ENCODE measurements at regions of chr2 and their contacts with region 1.

Region 1: DNA sequence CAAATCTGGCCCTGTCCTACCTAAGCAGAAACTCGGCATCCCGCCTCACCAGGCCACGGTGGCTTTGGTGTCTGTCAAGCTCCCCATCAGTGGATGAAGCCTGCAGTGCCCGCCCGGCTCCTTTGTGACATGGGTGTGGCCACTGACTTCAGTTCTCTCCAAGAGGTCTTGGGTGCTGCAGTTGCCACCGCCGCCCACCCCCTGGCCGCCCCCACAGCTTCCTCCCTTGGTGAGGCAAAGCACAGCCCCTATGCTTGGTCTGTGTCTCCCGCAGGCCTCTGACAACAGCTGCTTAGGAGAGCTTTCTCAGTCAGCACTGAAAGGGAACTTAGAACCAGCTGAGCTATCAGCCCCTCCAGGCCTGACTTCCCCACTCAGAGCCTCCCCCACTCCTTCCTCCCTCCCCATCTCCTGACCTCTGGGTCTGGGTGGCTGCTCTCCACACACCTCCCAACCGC is 22.9 kb upstream of the GPR55 start:
- DNase-seq: no peak
- ATAC-seq: no peak
- H3K4me3 ChIP-seq: no peak overlapping the region
- H3K4me3 Mint-ChIP-seq: no peak overlapping the region
- H3K27ac ChIP-seq: no peak overlapping the region
- H3K27ac Mint-ChIP-seq: no peak overlapping the region
- H3K4me1 ChIP-seq: peaks cover 11% of the 10 kb centered on the region
- H3K4me1 Mint-ChIP-seq: peaks cover 25% of the 10 kb centered on the region
- H3K27me3 ChIP-seq: no peaks in the 10 kb centered on the region
- H3K27me3 Mint-ChIP-seq: no peaks in the 10 kb centered on the region
- CTCF ChIP-seq: no peak

Region 2: DNA sequence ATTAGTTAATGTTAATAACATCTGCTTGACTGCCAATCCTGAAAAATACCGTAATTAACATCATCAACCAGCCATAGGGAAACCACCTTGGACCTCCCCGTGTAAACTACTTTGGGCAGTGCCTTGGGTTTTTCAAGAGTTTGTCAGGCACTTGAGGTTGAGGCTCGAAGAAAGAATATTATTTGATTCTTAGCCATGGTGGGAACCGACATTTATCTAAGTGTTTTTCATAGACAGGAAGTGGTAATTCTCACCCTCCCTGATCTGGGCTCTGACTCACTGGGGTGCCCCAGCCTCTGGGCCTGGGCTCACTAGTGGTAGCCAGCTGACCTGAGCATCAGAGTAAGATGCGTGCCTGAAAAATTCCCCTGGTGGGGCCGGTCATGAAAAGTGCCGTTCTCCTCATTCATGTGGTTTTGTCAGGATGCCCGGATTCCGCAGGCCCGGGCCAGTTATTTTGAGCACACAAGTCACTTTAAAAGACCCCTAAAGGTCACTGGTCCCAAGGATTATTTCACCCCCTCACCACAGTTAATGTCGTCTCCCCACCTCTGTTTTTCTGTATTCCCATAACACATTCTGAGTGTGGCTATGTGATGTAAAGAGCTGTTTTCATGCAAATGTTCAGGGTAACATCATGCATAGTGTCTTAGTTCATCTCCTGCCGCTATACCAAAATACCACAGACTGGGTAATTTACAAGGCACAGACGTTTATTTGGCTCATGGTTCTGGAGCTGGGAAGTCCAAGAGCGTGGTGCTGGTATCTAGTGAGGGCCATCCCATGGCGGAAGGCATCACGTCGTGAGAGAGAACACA is 26.4 kb after region 1 on chr2:
- CTCF ChIA-PET with region 1: no interaction called
- POLR2A ChIA-PET with region 1: no interaction called
- intact Hi-C with region 1: loop called in 1 of 2 experiments (anchors 2 kb)
- DNase-seq: peak; percentile 46 to 96 (median 75)
- ATAC-seq: peak; percentile 85
- H3K4me3 ChIP-seq: peak overlapping the region in 1 of 2 experiments; percentile 9
- H3K4me3 Mint-ChIP-seq: peak overlapping the region; percentile 66
- H3K27ac ChIP-seq: peak overlapping the region; percentile 3 to 67
- H3K27ac Mint-ChIP-seq: peak overlapping the region; percentile 91
- H3K4me1 ChIP-seq: peaks cover 24% of the 10 kb centered on the region
- H3K4me1 Mint-ChIP-seq: peaks cover 52% of the 10 kb centered on the region
- H3K27me3 ChIP-seq: peaks cover 0 to 3% of the 10 kb centered on the region in 2 experiments
- H3K27me3 Mint-ChIP-seq: no peaks in the 10 kb centered on the region
- CTCF ChIP-seq: no peak

Region 3: DNA sequence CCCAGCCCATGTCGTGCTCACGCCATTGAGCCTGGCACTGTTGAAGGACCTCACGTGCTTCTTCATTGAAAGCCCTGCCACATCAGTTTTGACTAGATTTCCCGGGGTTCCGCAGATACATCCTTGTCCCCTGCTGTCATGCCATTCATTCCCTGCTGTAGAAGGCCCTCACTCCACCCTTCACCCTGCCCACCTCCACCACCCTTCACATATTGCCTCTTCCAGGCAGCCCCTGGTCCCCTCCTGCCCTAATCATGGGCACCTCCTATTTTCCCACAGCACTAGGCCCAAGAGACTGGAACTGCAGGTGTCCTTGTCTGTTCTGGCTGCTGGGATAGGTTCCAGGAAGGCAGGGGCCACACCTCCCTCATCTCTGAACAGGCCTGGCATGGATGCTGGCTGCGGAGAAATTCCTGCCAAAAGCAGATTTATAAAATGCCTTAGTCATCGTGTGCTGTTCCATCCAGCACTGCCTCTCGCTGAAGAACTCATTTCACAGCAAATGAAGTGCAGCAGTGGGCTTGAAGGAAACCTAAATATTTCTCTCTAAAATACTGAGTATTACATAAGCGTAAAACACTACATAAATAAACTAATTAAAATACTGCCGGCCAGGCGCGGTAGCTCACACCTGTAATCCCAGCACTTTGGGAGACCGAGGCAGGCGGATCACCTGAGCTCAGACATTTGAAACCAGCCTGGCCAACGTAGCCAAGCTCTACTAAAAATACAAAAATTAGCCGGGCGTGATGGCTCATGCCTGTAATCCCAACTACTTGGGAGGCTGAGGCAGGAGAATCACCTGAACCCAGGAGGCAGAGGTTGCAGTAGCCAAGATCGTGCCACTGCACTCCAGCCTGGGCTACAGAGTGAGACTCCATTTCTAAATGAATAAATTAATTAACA is 1641.0 kb after region 1 on chr2:
- CTCF ChIA-PET with region 1: no interaction called
- POLR2A ChIA-PET with region 1: no interaction called
- intact Hi-C with region 1: no loop called
- DNase-seq: no peak
- ATAC-seq: no peak
- H3K4me3 ChIP-seq: no peak overlapping the region
- H3K4me3 Mint-ChIP-seq: no peak overlapping the region
- H3K27ac ChIP-seq: no peak overlapping the region
- H3K27ac Mint-ChIP-seq: no peak overlapping the region
- H3K4me1 ChIP-seq: no peaks in the 10 kb centered on the region
- H3K4me1 Mint-ChIP-seq: no peaks in the 10 kb centered on the region
- H3K27me3 ChIP-seq: no peaks in the 10 kb centered on the region
- H3K27me3 Mint-ChIP-seq: no peaks in the 10 kb centered on the region
- CTCF ChIP-seq: no peak